PC-3 (cell line): ENCODE measurements at regions of chr10 and their contacts with region 1.

Region 1: GRCh38 chr10:24642622-24643417 is 80.9 kb downstream of the ARHGAP21 start:
- DNase-seq: peak; percentile 88
- ATAC-seq: peak; percentile 72
- H3K4me3 ChIP-seq: no peak overlapping the region
- H3K27ac ChIP-seq: peak overlapping the region; percentile 64
- H3K4me1 ChIP-seq: peaks cover 34% of the 10 kb centered on the region
- H3K27me3 ChIP-seq: no peaks in the 10 kb centered on the region
- CTCF ChIP-seq: peak; percentile 83

Region 2: DNA sequence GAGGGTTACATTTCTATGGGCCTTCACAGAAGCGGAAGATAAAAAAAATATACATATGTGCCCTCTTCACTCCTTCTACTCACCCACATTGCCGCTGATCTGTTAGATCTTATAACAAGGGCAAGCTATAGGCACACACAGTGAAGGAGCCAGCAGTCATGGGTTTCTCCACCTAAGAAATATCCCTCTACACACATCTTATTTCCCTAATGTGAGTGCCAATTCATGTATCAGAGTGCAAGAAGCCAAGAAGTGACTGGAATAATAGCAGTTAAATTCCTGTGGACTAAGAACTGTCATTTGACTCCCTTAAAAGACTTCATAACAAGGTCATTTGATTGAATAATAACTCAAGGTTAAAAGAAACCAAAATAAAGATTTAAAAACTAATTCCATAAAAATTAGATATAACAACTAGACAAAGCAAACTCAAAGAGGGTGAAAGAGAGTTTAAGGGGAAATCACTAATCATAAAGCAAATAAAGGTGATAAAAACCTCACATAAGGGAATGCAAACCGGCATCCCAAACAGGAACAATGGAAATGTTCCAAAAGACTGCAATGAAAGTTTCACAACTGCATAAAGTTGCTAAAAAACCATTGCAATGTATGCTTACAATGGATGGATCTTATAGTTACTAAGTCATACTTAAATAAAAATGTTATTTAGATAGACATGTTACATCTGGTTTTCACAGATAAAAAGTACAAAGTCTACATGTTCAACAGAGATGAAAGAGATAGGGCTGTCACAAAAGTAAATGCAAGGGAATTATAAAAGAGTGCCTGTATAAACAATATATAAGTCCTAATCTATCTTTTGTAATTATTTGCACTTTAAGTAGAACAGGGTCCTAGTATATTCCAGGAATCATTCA is 38.1 kb after region 1 on chr10:
- CTCF ChIA-PET with region 1: no interaction called
- POLR2A ChIA-PET with region 1: no interaction called
- intact Hi-C with region 1: loop called (anchors 5 kb)
- DNase-seq: peak; percentile 18
- ATAC-seq: peak; percentile 58
- H3K4me3 ChIP-seq: no peak overlapping the region
- H3K27ac ChIP-seq: no peak overlapping the region
- H3K4me1 ChIP-seq: peaks cover 14% of the 10 kb centered on the region
- H3K27me3 ChIP-seq: no peaks in the 10 kb centered on the region
- CTCF ChIP-seq: no peak

Region 3: GRCh38 chr10:24690961-24691512 is 48.2 kb after region 1 on chr10:
- CTCF ChIA-PET with region 1: no interaction called
- POLR2A ChIA-PET with region 1: no interaction called
- intact Hi-C with region 1: no loop called
- DNase-seq: no peak
- ATAC-seq: no peak
- H3K4me3 ChIP-seq: no peak overlapping the region
- H3K27ac ChIP-seq: no peak overlapping the region
- H3K4me1 ChIP-seq: no peaks in the 10 kb centered on the region
- H3K27me3 ChIP-seq: no peaks in the 10 kb centered on the region
- CTCF ChIP-seq: no peak

Region 4: DNA sequence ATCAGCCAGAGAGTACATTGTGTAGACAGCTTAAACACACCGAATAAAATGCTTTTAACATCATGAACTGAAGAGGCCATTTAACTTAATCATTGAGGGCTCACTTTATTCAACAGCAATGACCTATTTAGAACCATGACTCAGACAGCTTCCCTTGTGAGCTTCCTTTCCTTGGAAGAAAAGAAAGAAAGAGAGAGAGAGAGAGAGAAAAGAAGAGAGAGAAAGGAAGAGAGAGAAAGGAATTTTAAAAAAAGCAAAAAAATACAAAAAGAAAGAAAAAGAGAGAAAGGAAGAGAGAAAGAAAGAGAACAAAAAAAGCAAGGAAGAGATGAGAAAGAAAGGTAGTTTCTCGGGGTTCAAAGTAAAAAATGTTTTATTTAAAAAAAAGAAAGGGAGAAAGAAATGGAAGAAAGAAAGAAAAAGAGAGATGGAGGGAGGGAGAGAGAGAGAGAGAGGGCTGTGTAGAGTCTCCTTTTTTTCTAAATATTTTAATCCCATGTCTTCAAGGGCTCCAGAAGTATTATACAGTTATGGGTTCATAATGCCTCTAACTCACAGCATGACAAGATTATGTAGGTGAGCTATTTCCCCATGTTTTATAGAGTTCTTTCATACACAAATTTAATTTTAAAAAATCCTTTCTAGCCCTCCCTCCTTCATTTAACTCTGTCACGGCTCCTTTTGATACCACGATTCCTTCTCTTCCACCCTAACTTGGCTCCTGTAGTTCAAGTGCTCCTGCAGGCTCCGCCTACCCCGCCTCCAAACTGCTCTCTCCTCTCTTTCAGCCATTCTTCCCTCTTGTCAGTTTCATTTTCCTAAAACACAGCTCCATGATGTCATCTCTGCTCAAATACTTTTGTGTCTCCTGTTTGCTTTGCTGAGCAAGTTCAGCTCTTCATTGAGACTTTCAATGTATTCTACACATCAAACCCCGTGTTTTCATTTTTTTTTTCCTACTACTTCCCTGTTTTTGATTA is 224.1 kb after region 1 on chr10:
- CTCF ChIA-PET with region 1: no interaction called
- POLR2A ChIA-PET with region 1: no interaction called
- intact Hi-C with region 1: loop called (anchors 10 kb)
- DNase-seq: peak; percentile 57
- ATAC-seq: peak; percentile 41
- H3K4me3 ChIP-seq: no peak overlapping the region
- H3K27ac ChIP-seq: peak overlapping the region; percentile 34
- H3K4me1 ChIP-seq: peaks cover 45% of the 10 kb centered on the region
- H3K27me3 ChIP-seq: no peaks in the 10 kb centered on the region
- CTCF ChIP-seq: no peak

Region 5: DNA sequence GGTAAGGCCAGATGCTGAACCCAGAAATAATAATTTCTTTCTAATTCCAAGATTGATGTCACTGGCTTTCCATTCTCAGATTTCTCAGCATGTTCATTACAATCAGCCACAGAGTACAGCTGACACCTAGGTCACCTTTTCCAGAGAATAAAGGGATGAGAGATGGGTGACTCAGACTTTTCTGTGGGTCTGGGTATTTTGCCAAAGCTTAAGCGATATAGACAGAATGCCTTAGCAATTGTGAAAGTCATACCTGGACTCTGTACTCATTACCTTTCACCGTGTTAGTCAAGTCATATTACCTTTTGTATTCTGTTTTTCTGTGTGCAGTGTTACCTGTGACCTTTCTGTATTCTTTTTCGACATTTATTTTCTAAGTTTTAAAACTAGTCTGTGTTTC is 320.2 kb after region 1 on chr10:
- CTCF ChIA-PET with region 1: interaction called, 3 read pairs
- POLR2A ChIA-PET with region 1: no interaction called
- intact Hi-C with region 1: loop called (anchors 2 kb)
- DNase-seq: peak; percentile 94
- ATAC-seq: peak; percentile 83
- H3K4me3 ChIP-seq: no peak overlapping the region
- H3K27ac ChIP-seq: peak overlapping the region; percentile 83
- H3K4me1 ChIP-seq: peaks cover 45% of the 10 kb centered on the region
- H3K27me3 ChIP-seq: no peaks in the 10 kb centered on the region
- CTCF ChIP-seq: no peak

Region 6: DNA sequence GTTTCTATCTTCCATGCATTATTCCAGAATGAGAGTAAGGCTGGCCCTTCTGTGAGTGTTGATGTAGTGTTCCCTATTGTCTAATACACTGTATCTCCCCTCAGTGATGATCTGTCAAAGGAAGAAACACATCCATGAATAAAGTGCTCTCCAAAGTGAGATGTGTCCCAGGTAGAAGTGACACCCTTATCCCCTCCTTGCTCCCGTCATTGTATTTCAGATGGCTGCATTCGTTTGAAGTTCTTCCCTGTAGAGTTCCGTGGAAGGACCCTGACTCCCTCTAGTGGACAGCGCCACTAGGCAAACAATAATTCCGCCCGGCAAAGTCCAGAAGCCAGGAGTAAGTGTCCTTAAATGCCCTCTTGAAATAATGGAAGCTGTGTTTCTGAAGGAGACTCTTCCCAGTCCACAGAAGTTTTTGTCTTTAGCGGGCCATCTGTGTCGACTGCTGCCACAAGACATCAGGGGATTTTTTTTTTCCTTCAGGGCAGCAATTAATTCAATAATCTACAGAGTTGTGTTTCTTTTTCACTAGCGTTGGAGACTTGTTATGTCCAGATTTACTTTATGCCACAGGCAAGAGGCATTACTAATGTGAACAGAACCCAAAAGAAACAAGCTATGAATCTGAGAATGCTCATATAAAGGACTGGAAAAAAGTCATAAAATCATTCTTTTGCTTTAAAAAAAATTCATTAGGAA is 438.2 kb after region 1 on chr10:
- CTCF ChIA-PET with region 1: interaction called, 3 read pairs
- POLR2A ChIA-PET with region 1: no interaction called
- intact Hi-C with region 1: loop called (anchors 10 kb)
- DNase-seq: peak; percentile 83
- ATAC-seq: peak; percentile 96
- H3K4me3 ChIP-seq: no peak overlapping the region
- H3K27ac ChIP-seq: no peak overlapping the region
- H3K4me1 ChIP-seq: 0 out of 2 replicates have a peak, but pooled peaks cover 3% of the 10 kb centered on the region
- H3K27me3 ChIP-seq: no peaks in the 10 kb centered on the region
- CTCF ChIP-seq: peak; percentile 86

Region 7: DNA sequence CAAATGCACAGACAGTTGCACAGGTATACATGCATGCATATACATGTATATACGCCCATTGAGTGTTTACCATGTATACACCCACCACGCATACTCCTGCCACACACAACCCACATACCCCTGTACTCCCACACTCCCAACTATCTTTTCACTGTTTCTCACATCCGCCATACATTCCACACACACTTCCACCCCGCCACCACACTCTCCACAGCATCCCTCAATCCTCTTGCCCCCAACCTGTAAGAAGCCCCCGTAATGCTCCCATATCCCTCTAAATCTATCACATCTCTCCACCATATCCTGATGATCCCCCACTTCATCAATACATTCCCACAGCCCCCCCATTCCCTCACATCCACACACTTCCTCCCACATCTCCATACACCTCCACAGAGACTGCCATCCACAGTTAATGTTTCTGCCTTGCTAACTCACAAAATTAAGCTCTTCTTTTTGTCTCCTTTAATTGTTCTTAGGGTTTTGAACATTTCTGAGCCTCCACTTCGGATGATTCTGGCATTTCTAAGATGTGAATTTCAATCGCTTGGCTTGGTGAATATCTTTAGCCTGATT is 579.4 kb after region 1 on chr10:
- CTCF ChIA-PET with region 1: no interaction called
- POLR2A ChIA-PET with region 1: no interaction called
- intact Hi-C with region 1: no loop called
- DNase-seq: no peak
- ATAC-seq: no peak
- H3K4me3 ChIP-seq: no peak overlapping the region
- H3K27ac ChIP-seq: no peak overlapping the region
- H3K4me1 ChIP-seq: no peaks in the 10 kb centered on the region
- H3K27me3 ChIP-seq: peaks cover 24% of the 10 kb centered on the region
- CTCF ChIP-seq: no peak